Caco-2 (cell line): ENCODE measurements at regions of chr4 and their contacts with region 1.

Region 1: DNA sequence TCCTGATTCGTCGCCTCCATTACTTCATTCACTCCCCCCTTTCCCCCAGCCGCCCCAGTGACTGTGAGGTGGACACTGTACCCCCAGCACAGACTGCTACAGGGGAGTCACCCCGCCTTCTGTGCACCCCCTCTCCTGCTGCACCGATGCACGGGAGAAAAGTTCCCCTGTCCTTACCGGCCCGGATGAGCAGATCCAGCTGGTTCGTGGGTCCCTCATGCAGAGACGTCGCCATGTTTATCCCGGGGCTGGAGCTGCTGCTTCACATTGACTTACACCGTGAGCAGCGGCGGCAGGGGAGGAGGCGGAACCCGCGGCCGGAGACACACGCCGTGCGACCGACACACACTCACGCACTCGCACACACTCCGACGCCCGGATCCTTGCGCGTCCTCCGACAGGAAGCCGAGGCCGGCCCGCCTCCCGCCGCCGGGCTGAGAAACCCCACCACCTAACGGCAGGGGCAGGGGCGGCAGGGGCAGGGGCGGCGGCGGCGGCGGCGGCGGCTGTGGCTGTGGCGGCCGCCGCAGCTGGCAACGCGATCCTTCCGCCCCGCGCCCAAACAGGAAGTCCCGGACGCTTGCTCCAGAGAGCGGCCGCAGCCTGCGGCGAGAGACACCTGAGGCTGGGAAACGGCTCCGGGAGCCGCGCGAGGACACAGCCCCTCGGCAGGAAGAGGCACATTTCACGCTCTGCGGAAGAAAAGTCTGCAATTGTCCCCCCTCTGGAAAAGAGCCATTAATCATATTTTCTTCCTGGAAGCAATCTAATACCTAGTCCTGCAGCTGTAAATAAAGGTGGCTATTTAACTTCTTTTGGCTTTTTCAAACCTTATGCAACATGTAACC is 68.6 kb downstream of the NOCT start:
- DNase-seq: peak; percentile 91 to 93
- H3K4me3 ChIP-seq: peak overlapping the region; percentile 88
- H3K4me3 Mint-ChIP-seq: peak overlapping the region; percentile 97
- H3K27ac Mint-ChIP-seq: peak overlapping the region; percentile 98
- H3K4me1 ChIP-seq: peaks cover 14% of the 10 kb centered on the region; the same call in 1 of the 2 replicates
- H3K4me1 Mint-ChIP-seq: peaks cover 19% of the 10 kb centered on the region
- H3K27me3 ChIP-seq: no peaks in the 10 kb centered on the region
- H3K27me3 Mint-ChIP-seq: no peaks in the 10 kb centered on the region
- CTCF ChIP-seq: peak; percentile 21

Region 2: DNA sequence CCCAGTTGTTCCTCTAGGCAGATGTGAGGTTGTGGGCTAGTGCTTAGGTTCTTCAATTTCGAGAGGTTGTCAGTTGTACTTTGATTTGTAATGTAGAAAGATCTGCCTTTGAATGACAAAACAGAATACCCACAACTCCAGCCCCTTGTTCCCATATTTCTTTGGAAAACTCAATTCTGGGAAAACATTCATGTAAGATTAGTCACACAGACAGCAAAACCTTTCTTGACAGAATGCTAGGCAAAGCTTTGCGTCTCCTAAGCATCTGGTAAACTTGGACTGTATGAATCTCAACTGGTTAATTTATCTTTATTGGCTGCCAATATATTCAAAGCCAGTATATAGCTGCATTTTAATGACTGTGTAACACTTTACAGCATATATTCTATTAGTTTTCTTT is 33.7 kb before region 1 on chr4:
- CTCF ChIA-PET with region 1: no interaction called
- POLR2A ChIA-PET with region 1: no interaction called
- intact Hi-C with region 1: loop called (anchors 2 kb)
- DNase-seq: no peak
- H3K4me3 ChIP-seq: no peak overlapping the region
- H3K4me3 Mint-ChIP-seq: no peak overlapping the region
- H3K27ac Mint-ChIP-seq: no peak overlapping the region
- H3K4me1 ChIP-seq: peaks cover 13% of the 10 kb centered on the region
- H3K4me1 Mint-ChIP-seq: peaks cover 19% of the 10 kb centered on the region
- H3K27me3 ChIP-seq: no peaks in the 10 kb centered on the region
- H3K27me3 Mint-ChIP-seq: no peaks in the 10 kb centered on the region
- CTCF ChIP-seq: no peak

Region 3: DNA sequence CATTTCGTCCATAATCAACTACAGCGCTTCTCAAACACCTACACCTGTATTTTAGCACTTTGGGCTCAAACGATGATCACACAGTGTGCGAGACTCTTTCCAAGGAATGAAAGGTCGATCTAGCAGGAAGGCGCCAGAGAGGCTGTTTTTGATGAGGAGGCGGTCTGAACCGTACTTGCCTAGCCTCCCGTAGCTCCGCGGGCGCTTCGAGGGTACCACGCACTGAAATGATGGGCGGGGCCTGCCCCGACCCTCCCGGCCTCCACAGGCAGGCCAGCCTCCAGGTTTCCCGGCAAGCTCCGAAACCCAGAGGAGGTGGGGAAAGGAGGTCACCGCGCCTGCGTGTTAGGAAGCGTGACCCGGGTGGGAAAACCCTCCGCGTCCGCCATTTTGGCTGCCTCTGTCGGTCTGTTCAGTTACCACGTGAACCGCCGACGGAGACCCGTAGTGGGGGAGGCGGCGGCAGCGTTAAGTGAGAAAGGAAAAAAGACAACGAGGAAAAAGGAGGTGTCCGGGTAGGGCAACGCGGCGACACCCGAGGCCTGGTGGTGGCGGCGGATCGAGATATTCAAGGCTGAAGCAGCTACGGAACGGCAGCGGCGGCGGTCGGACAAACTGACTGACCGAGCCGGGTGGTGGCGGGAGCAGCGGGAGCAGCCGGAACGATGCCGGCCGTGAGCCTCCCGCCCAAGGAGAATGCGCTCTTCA is 217.1 kb after region 1 on chr4 and contains the start of gene NAA15:
- CTCF ChIA-PET with region 1: no interaction called
- POLR2A ChIA-PET with region 1: interaction called, 4 read pairs
- intact Hi-C with region 1: loop called (anchors 2 kb)
- DNase-seq: peak; percentile 98
- H3K4me3 ChIP-seq: peak within 1 kb of the TSS; percentile 99
- H3K4me3 Mint-ChIP-seq: peak within 1 kb of the TSS; percentile 96
- H3K27ac Mint-ChIP-seq: peak within 1 kb of the TSS; percentile 97
- H3K4me1 ChIP-seq: peaks cover 11% of the 10 kb centered on the region
- H3K4me1 Mint-ChIP-seq: no peaks in the 10 kb centered on the region
- H3K27me3 ChIP-seq: no peaks in the 10 kb centered on the region
- H3K27me3 Mint-ChIP-seq: no peaks in the 10 kb centered on the region
- CTCF ChIP-seq: no peak
- total RNA-seq, gene NAA15: 63.1 and 71.6 TPM in 2 replicates

Region 4: DNA sequence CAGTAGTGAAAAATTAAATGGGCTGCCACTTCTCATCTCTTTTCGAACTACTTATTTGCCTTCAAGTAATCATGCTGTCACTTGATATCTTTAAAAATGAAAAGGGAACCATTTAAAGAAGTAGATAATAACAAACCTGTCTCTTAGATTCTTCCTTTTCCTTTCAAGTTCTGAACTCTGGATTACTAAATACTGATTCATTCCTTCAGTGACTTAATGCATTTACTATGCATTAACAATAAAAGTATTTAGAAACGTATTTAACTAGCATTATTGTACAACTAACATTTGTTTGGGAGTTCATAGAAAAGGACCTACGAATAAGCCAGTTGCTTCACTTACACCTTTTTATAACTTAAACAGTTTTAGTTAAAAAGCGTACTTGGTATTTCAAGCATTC is 308.6 kb after region 1 on chr4:
- CTCF ChIA-PET with region 1: no interaction called
- POLR2A ChIA-PET with region 1: no interaction called
- intact Hi-C with region 1: no loop called
- DNase-seq: no peak
- H3K4me3 ChIP-seq: no peak overlapping the region
- H3K4me3 Mint-ChIP-seq: no peak overlapping the region
- H3K27ac Mint-ChIP-seq: no peak overlapping the region
- H3K4me1 ChIP-seq: no peaks in the 10 kb centered on the region
- H3K4me1 Mint-ChIP-seq: no peaks in the 10 kb centered on the region
- H3K27me3 ChIP-seq: no peaks in the 10 kb centered on the region
- H3K27me3 Mint-ChIP-seq: no peaks in the 10 kb centered on the region
- CTCF ChIP-seq: no peak